T-cell (primary cell): ENCODE measurements at regions of chr1 and their contacts with region 1.

Region 1: DNA sequence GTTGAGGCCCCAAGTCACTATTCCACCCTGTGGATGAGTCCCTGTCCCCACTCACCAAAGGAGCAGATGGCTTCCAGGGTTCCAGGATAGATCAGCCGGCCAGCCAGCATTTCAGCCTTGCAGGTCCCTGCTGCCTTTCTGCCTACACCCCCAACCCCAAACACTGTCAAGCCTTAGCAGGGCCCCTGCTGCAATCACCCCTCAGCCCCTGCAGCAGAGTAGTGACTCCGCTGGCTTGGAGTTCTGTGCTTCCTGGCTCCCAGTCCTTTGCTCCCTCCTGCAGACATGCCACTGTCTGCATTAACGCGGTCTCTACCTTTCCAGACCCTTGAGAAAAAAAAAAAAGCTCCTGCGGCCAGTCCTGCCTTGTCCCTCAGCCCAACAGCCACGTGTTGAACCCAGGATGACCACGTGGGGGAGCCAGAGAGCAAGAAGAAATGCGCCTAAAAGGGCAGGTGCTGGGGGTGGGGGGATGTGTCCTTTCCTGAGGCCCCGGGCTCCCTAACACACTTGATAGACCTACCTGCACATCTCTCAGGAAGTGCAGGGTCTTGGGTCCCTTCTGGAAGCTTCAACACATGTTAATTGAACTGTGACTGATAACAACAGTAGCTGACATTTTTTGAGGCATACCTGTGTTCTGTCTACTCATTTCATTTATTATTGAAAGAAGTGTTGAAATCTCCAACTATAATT is 37.4 kb downstream of the RASSF5 start:
- DNase-seq: peak; percentile 36 to 88 (median 77)
- ATAC-seq: peak; percentile 83 to 93 (median 90)
- H3K4me3 ChIP-seq: no peak overlapping the region
- H3K4me3 Mint-ChIP-seq: no peak overlapping the region
- H3K27ac ChIP-seq: no peak overlapping the region
- H3K27ac Mint-ChIP-seq: peak overlapping the region; percentile 39 to 48
- H3K4me1 ChIP-seq: peaks cover 0 to 9% of the 10 kb centered on the region in 2 experiments
- H3K4me1 Mint-ChIP-seq: peaks cover 16 to 20% (median 19%) of the 10 kb centered on the region in 3 donors
- H3K27me3 ChIP-seq: no peaks in the 10 kb centered on the region
- H3K27me3 Mint-ChIP-seq: no peaks in the 10 kb centered on the region

Region 2: GRCh38 chr1:206479183-206480125 is 65.3 kb before region 1 on chr1:
- CTCF ChIA-PET with region 1: interaction called, 5 to 15 read pairs
- POLR2A ChIA-PET with region 1: no interaction called
- DNase-seq: peak; percentile 34 to 85 (median 61)
- ATAC-seq: peak; percentile 70 to 81 (median 74)
- H3K4me3 ChIP-seq: no peak overlapping the region
- H3K4me3 Mint-ChIP-seq: no peak overlapping the region
- H3K27ac ChIP-seq: peak overlapping the region; percentile 16
- H3K27ac Mint-ChIP-seq: peak overlapping the region; percentile 64 to 78
- H3K4me1 ChIP-seq: peaks cover 0 to 18% of the 10 kb centered on the region in 2 experiments
- H3K4me1 Mint-ChIP-seq: peaks cover 9 to 31% (median 14%) of the 10 kb centered on the region in 3 donors
- H3K27me3 ChIP-seq: no peaks in the 10 kb centered on the region
- H3K27me3 Mint-ChIP-seq: no peaks in the 10 kb centered on the region

Region 3: GRCh38 chr1:206563367-206564207 is 18.9 kb after region 1 on chr1:
- CTCF ChIA-PET with region 1: interaction called, 10 to 12 read pairs
- POLR2A ChIA-PET with region 1: interaction called, 3 to 18 read pairs
- DNase-seq: no peak
- ATAC-seq: peak in 2 of 4 experiments; percentile 9 to 28
- H3K4me3 ChIP-seq: peak overlapping the region; percentile 11 to 42
- H3K4me3 Mint-ChIP-seq: peak overlapping the region; percentile 68 to 96 (median 75)
- H3K27ac ChIP-seq: peak overlapping the region; percentile 81
- H3K27ac Mint-ChIP-seq: peak overlapping the region; percentile 97 to 99
- H3K4me1 ChIP-seq: peaks cover 81 to 94% of the 10 kb centered on the region in 2 experiments
- H3K4me1 Mint-ChIP-seq: peaks cover 91 to 96% (median 94%) of the 10 kb centered on the region in 3 donors
- H3K27me3 ChIP-seq: no peaks in the 10 kb centered on the region
- H3K27me3 Mint-ChIP-seq: no peaks in the 10 kb centered on the region

Region 4: GRCh38 chr1:206583707-206584648 is 39.3 kb after region 1 on chr1:
- CTCF ChIA-PET with region 1: interaction called, 90 to 133 read pairs
- POLR2A ChIA-PET with region 1: interaction called, 5 to 14 read pairs
- DNase-seq: peak; percentile 62 to 93 (median 81)
- ATAC-seq: peak; percentile 38 to 60 (median 54)
- H3K4me3 ChIP-seq: no peak overlapping the region
- H3K4me3 Mint-ChIP-seq: peak overlapping the region; percentile 61 to 96 (median 79)
- H3K27ac ChIP-seq: peak overlapping the region; percentile 94
- H3K27ac Mint-ChIP-seq: peak overlapping the region; percentile 97 to 99
- H3K4me1 ChIP-seq: peaks cover 41 to 73% of the 10 kb centered on the region in 2 experiments
- H3K4me1 Mint-ChIP-seq: peaks cover 58 to 92% (median 89%) of the 10 kb centered on the region in 3 donors
- H3K27me3 ChIP-seq: no peaks in the 10 kb centered on the region
- H3K27me3 Mint-ChIP-seq: no peaks in the 10 kb centered on the region

Region 5: GRCh38 chr1:206663832-206664652 is 119.3 kb after region 1 on chr1:
- CTCF ChIA-PET with region 1: interaction called, 11 to 13 read pairs
- POLR2A ChIA-PET with region 1: no interaction called
- DNase-seq: peak in 34 of 35 experiments; percentile 24 to 85 (median 56)
- ATAC-seq: peak; percentile 66 to 90 (median 80)
- H3K4me3 ChIP-seq: no peak overlapping the region
- H3K4me3 Mint-ChIP-seq: no peak overlapping the region
- H3K27ac ChIP-seq: no peak overlapping the region
- H3K27ac Mint-ChIP-seq: no peak overlapping the region
- H3K4me1 ChIP-seq: peaks cover 0 to 15% of the 10 kb centered on the region in 2 experiments
- H3K4me1 Mint-ChIP-seq: peaks cover 7 to 13% (median 7%) of the 10 kb centered on the region in 3 donors
- H3K27me3 ChIP-seq: peaks cover 0 to 23% of the 10 kb centered on the region in 2 experiments
- H3K27me3 Mint-ChIP-seq: peaks cover 14 to 30% of the 10 kb centered on the region in 2 donors

Region 6: DNA sequence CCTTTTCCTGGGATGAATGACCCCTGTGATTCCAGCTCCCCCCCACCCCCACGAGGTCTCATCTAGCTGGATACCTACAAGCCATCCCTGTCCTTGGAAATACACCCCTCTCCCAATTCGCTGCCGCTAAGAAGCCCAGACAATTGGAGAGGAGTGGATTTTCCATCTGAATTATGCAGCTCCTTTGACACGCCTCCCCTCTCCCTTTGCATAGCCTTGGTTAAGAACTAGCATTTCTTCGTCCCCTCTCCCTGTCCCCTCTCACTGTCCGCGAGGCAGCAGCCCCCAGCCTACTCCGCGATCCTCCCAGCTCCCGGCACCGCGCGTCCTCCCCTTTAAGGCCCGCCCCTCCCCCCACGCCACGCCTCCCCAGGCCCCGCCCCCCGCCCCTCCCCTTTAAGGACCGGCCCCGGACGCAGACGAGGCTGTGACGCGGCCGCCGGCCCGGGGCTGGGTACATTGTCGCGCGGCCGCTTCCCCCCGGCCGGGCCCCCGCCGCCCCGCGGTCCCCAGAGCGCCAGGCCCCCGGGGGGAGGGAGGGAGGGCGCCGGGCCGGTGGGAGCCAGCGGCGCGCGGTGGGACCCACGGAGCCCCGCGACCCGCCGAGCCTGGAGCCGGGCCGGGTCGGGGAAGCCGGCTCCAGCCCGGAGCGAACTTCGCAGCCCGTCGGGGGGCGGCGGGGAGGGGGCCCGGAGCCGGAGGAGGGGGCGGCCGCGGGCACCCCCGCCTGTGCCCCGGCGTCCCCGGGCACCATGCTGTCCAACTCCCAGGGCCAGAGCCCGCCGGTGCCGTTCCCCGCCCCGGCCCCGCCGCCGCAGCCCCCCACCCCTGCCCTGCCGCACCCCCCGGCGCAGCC is 140.0 kb after region 1 on chr1 and contains the start of gene MAPKAPK2:
- CTCF ChIA-PET with region 1: no interaction called
- POLR2A ChIA-PET with region 1: no interaction called
- DNase-seq: peak; percentile 34 to 85 (median 63)
- ATAC-seq: peak; percentile 80 to 85 (median 82)
- H3K4me3 ChIP-seq: peak within 1 kb of the TSS; percentile 92 to 99
- H3K4me3 Mint-ChIP-seq: peak within 1 kb of the TSS; percentile 97 to 99 (median 99)
- H3K27ac ChIP-seq: peak within 1 kb of the TSS; percentile 88
- H3K27ac Mint-ChIP-seq: peak within 1 kb of the TSS; percentile 88 to 89
- H3K4me1 ChIP-seq: peaks cover 10 to 34% of the 10 kb centered on the region in 2 experiments
- H3K4me1 Mint-ChIP-seq: peaks cover 36 to 49% (median 41%) of the 10 kb centered on the region in 3 donors
- H3K27me3 ChIP-seq: peaks cover 0 to 14% of the 10 kb centered on the region in 2 experiments
- H3K27me3 Mint-ChIP-seq: peaks cover 0 to 5% of the 10 kb centered on the region in 2 donors
- total RNA-seq, gene MAPKAPK2: 64.3 to 117 (median 78.4) TPM